ENCODE measurements at regions of chr19 and their contacts with region 1.

Region 1: DNA sequence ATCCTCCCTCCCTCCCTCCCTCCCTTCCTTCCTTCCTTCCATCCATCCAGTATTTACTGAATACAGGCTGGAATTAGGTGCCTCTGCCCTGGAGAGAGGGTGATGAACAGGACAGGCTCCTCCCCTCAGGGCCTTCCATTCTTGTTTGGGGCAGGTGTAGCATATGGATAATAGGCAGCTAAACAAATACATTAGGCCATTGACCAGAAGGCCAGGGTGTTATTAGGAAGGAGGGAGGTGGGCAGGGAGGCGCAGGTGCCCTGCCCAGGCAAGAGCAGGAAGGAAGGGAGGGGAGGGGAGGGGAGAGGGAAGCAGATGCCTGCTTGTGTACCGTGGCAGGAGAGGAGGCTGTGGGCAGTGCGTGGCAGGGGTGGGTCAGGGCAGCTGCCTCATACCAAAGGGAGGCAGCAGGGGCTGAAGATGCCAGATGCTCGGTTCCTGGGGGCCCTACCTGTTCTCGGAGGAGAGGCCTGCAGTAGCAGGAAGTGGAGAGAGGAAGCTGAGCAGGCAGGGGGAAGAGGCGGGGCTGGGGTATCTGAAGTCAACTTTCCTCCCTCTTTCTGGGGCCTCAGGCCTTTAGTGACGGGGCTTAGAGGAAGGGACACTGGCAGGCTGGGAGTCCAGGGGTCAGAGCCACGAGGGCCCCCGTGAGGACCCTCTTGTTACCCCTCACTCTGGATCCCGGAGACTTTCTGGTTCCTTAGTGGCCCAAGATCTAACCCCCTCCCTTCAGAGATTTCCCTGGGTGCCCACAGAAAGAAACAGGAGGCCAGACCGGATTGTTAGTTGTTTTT is at the start of gene RINL:
- DNase-seq: peak; percentile 57
- ATAC-seq: peak; percentile 94
- H3K4me3 Mint-ChIP-seq: peak within 1 kb of the TSS; percentile 92
- H3K27ac Mint-ChIP-seq: peak within 1 kb of the TSS; percentile 98
- H3K4me1 Mint-ChIP-seq: peaks cover 48% of the 10 kb centered on the region
- H3K27me3 Mint-ChIP-seq: no peaks in the 10 kb centered on the region
- CTCF ChIP-seq: no peak
- total RNA-seq, gene RINL: 53.5 and 65.0 TPM in 2 replicates

Region 2: DNA sequence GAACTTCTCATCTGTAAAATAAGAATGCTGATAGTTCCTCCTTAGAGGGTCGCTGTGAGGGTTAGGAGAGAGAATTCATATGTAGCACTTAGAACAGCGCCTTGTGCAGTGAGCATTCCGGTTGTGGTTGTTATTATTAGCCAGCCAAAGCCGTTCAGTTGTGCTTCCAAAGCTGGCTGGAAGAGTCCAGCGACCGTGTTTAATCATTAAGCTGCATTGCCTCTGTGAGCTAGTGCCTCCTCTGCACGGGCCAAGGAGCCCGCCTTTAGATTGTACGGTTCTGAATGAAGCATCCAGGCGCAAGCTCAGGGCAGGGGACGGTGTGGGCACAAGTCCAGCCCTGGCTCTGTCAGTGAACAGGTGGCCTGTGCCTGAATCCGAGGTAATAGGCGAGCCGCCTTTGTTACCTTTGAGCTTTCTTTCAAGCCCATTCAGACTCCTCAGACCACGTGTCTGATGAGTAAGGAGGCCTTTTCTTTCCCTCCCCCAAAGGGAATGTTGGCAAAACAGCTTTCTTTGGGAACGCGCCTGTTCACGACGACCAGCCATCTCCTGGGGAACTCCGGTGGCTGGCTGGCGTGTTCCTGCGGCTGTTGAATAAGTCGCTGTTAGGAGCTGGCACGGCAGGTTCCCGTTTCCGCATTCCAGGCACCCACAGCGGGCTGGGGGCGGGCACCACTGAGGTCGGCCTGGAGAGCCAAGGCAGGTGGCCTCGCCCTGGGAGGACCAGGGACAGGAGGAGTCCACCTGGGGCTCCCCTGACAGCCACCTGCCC is 945.9 kb before region 1 on chr19:
- CTCF ChIA-PET with region 1: no interaction called
- POLR2A ChIA-PET with region 1: no interaction called
- intact Hi-C with region 1: no loop called
- DNase-seq: peak; percentile 52
- ATAC-seq: peak; percentile 30
- H3K4me3 Mint-ChIP-seq: peak overlapping the region; percentile 83
- H3K27ac Mint-ChIP-seq: peak overlapping the region; percentile 92
- H3K4me1 Mint-ChIP-seq: peaks cover 94% of the 10 kb centered on the region
- H3K27me3 Mint-ChIP-seq: no peaks in the 10 kb centered on the region
- CTCF ChIP-seq: no peak

Region 3: DNA sequence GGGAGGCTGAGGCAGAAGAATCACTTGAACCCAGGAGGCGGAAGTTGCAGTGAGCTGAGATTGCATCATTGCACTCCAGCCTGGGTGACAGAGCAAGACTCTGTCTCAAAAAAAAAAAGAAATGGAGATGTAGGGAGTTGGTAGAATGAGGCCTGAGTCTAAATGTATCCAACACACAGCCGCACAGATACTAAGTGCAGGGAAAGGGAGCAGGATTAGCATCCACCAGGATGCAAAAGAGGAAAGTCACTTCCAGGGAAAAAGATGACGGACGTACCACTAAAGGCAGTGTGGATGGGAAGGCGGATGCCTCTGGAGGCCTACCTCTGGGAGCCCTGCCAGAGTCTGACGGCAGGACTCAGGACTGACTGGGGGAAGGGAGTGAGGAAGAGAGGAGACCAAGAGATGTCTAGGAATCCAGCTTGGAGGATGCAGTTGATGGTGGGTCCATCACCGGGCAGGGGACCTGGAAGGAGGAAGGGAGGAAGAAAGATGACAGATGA is 468.3 kb before region 1 on chr19:
- CTCF ChIA-PET with region 1: no interaction called
- POLR2A ChIA-PET with region 1: no interaction called
- intact Hi-C with region 1: no loop called
- DNase-seq: no peak
- ATAC-seq: no peak
- H3K4me3 Mint-ChIP-seq: no peak overlapping the region
- H3K27ac Mint-ChIP-seq: no peak overlapping the region
- H3K4me1 Mint-ChIP-seq: peaks cover 4% of the 10 kb centered on the region
- H3K27me3 Mint-ChIP-seq: no peaks in the 10 kb centered on the region
- CTCF ChIP-seq: no peak

Region 4: DNA sequence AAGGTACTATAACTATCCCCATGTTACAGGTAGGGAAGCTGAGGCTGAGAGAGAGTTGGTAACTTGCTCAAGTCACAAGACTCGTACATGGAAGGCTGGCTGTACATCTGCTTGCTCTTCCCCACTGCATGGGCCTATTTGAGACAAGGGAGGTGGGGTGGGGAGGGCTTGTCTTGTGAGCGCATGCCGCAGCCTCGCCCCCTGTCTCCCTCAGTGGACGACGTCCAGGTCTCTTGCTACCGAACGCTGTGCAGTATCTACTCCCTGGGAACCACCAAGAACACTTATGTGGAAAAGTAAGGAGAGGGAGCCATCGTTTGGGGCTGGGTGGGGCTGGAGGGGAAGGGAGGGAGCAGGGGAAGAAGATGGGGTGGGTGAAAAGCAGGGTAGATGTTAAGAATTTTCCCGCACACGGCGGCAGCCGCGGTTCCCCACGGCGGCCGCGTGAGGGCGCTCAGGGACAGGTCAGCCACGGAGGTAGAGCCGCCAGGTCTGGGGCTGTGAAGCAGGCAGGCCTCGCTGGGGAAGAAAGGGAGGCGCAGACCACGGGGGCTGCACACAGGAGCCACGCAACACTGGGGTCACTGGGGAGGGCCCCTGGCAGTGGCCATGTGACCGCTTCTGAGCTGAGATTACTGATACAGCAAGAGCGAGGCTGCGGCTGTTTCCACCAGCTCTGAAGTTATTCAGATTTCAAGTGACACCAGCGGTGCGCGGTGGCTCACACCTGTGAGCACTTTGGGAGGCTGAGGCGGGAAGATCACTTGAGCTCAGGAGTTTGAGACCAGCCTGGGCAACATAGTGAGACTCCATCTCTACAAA is 363.0 kb before region 1 on chr19:
- CTCF ChIA-PET with region 1: no interaction called
- POLR2A ChIA-PET with region 1: no interaction called
- intact Hi-C with region 1: loop called (anchors 10 kb)
- DNase-seq: peak; percentile 70
- ATAC-seq: peak; percentile 97
- H3K4me3 Mint-ChIP-seq: no peak overlapping the region
- H3K27ac Mint-ChIP-seq: no peak overlapping the region
- H3K4me1 Mint-ChIP-seq: peaks cover 5% of the 10 kb centered on the region
- H3K27me3 Mint-ChIP-seq: peaks cover 12% of the 10 kb centered on the region
- CTCF ChIP-seq: no peak

Region 5: GRCh38 chr19:38769635-38770211 is 108.3 kb before region 1 on chr19:
- CTCF ChIA-PET with region 1: no interaction called
- POLR2A ChIA-PET with region 1: interaction called, 12 read pairs
- intact Hi-C with region 1: no loop called
- DNase-seq: peak; percentile 94
- ATAC-seq: peak; percentile 89
- H3K4me3 Mint-ChIP-seq: peak overlapping the region; percentile 68
- H3K27ac Mint-ChIP-seq: peak overlapping the region; percentile 78
- H3K4me1 Mint-ChIP-seq: peaks cover 11% of the 10 kb centered on the region
- H3K27me3 Mint-ChIP-seq: no peaks in the 10 kb centered on the region
- CTCF ChIP-seq: peak; percentile 59

Region 6: DNA sequence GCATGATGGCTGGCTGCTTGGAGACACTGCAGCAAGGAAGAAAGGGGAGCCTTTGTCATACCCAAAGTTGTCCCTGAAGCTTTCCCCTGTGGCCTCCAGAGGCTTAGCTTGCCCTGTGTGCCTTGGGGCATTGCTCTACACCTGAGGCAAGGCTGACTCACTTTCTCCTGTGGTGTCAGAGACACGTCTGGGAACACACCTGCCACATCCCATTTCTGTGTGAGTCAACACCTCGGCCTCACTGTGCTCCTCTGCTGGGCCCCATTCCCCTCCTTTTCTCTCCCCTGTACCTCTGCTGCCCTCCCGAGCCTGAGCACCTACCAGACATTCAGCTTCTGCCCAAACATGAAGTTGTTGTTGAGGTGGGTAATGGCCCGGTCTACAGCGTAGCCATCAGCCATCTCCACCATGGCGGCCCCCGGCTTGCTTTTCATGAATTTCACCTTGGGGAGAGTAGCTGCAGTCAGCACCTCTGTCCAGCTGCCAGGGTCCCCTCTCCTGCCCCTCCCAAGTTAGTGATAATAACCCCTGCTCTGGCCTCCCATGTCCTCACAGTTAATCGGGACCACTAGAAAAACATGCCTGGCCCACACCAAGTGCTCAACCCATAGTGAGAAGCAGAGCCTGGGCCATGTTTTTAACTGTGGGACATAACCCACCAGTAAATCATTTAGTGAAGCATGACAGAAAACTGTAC is 39.3 kb before region 1 on chr19:
- CTCF ChIA-PET with region 1: interaction called, 3 read pairs
- POLR2A ChIA-PET with region 1: interaction called, 10 read pairs
- intact Hi-C with region 1: no loop called
- DNase-seq: no peak
- ATAC-seq: no peak
- H3K4me3 Mint-ChIP-seq: no peak overlapping the region
- H3K27ac Mint-ChIP-seq: peak overlapping the region; percentile 50
- H3K4me1 Mint-ChIP-seq: peaks cover 26% of the 10 kb centered on the region
- H3K27me3 Mint-ChIP-seq: no peaks in the 10 kb centered on the region
- CTCF ChIP-seq: no peak

Region 7: GRCh38 chr19:38862321-38863059 is 15.5 kb before region 1 on chr19:
- CTCF ChIA-PET with region 1: interaction called, 4 read pairs
- POLR2A ChIA-PET with region 1: interaction called, 69 read pairs
- intact Hi-C with region 1: loop called (anchors 2 kb)
- DNase-seq: no peak
- ATAC-seq: no peak
- H3K4me3 Mint-ChIP-seq: peak overlapping the region; percentile 38
- H3K27ac Mint-ChIP-seq: peak overlapping the region; percentile 75
- H3K4me1 Mint-ChIP-seq: peaks cover 79% of the 10 kb centered on the region
- H3K27me3 Mint-ChIP-seq: no peaks in the 10 kb centered on the region
- CTCF ChIP-seq: no peak

Region 8: DNA sequence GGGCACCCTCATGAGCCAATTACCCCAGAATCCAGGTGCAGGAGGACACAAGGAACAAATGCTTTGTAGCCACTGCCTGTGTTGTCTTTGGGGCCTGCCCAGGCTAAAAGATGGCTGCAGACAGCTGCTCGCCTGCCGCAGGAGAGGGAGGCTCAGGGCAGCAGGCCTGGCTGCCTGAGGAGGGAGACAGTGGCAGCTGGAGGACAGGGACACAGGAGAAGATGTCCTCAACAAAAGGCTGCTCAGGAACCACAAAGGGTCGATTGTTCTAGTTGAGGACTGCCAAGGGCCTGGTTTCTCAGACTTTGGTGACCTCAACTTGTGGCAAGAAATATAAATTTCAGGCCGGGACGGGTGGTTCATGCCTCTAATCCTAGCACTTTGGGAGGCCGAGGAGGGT is 13.8 kb after region 1 on chr19:
- CTCF ChIA-PET with region 1: interaction called, 19 read pairs
- POLR2A ChIA-PET with region 1: interaction called, 13 read pairs
- intact Hi-C with region 1: no loop called
- DNase-seq: no peak
- ATAC-seq: no peak
- H3K4me3 Mint-ChIP-seq: no peak overlapping the region
- H3K27ac Mint-ChIP-seq: no peak overlapping the region
- H3K4me1 Mint-ChIP-seq: peaks cover 1% of the 10 kb centered on the region
- H3K27me3 Mint-ChIP-seq: no peaks in the 10 kb centered on the region
- CTCF ChIP-seq: no peak

Region 9: GRCh38 chr19:38899447-38900219 is 21.7 kb after region 1 on chr19 and contains the starts of genes NFKBIB and SIRT2:
- CTCF ChIA-PET with region 1: interaction called, 4 read pairs
- POLR2A ChIA-PET with region 1: interaction called, 20 read pairs
- intact Hi-C with region 1: loop called (anchors 2 kb)
- DNase-seq: peak; percentile 91
- ATAC-seq: peak; percentile 91
- H3K4me3 Mint-ChIP-seq: peak within 1 kb of the TSS; percentile 91
- H3K27ac Mint-ChIP-seq: peak within 1 kb of the TSS; percentile 87
- H3K4me1 Mint-ChIP-seq: peaks cover 41% of the 10 kb centered on the region
- H3K27me3 Mint-ChIP-seq: no peaks in the 10 kb centered on the region
- CTCF ChIP-seq: no peak
- total RNA-seq, gene NFKBIB: 45.5 and 49.5 TPM in 2 replicates
- total RNA-seq, gene SIRT2: 28.4 and 32.7 TPM in 2 replicates

Region 10: GRCh38 chr19:39307046-39307823 is 429.3 kb after region 1 on chr19:
- CTCF ChIA-PET with region 1: no interaction called
- POLR2A ChIA-PET with region 1: no interaction called
- intact Hi-C with region 1: no loop called
- DNase-seq: no peak
- ATAC-seq: no peak
- H3K4me3 Mint-ChIP-seq: no peak overlapping the region
- H3K27ac Mint-ChIP-seq: no peak overlapping the region
- H3K4me1 Mint-ChIP-seq: no peaks in the 10 kb centered on the region
- H3K27me3 Mint-ChIP-seq: peaks cover 6% of the 10 kb centered on the region
- CTCF ChIP-seq: no peak